ENCODE measurements at regions of chr11 and their contacts with region 1.

Region 1: GRCh38 chr11:126310228-126310991 is 6.5 kb downstream of the DCPS start:
- DNase-seq: peak; percentile 70
- ATAC-seq: peak; percentile 84
- H3K4me3 Mint-ChIP-seq: no peak overlapping the region
- H3K27ac Mint-ChIP-seq: no peak overlapping the region
- H3K4me1 Mint-ChIP-seq: peaks cover 31% of the 10 kb centered on the region
- H3K27me3 Mint-ChIP-seq: no peaks in the 10 kb centered on the region

Region 2: DNA sequence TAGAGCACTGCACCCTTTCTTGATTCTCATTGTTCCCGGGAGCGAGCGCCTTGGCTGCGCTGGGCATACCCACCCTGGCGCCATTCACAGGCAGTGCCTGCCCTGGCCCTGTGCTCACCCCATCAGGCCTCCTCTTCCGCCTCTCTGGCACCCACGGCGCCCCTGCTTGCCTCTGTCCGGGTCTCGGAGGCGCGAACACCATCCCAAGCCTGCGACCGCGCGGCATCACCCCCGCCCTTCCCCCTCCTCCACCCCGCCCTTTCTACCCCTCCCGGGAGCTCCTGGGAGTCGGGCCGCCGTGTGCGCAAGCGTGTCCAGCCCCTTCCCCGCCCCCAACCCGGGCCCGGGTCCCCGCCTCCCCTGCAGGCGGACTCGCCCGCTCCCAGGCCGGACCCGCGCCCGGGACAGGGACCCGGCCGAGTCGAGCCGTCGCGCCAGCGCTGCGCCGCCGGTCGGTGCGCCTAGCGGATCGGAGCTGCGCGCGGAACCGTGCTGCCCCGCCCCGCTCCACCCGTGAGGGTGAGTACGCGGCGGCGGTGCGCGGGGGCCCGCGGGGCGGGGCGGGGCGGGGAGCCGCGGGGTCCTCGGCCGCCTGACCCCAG is 45.0 kb after region 1 on chr11 and contains the start of gene ST3GAL4:
- CTCF ChIA-PET with region 1: interaction called, 11 read pairs
- POLR2A ChIA-PET with region 1: no interaction called
- DNase-seq: peak; percentile 78
- ATAC-seq: peak; percentile 79
- H3K4me3 Mint-ChIP-seq: peak within 1 kb of the TSS; percentile 94
- H3K27ac Mint-ChIP-seq: peak within 1 kb of the TSS; percentile 90
- H3K4me1 Mint-ChIP-seq: peaks cover 51% of the 10 kb centered on the region
- H3K27me3 Mint-ChIP-seq: no peaks in the 10 kb centered on the region
- total RNA-seq, gene ST3GAL4: 10.3 to 11.8 TPM

Region 3: DNA sequence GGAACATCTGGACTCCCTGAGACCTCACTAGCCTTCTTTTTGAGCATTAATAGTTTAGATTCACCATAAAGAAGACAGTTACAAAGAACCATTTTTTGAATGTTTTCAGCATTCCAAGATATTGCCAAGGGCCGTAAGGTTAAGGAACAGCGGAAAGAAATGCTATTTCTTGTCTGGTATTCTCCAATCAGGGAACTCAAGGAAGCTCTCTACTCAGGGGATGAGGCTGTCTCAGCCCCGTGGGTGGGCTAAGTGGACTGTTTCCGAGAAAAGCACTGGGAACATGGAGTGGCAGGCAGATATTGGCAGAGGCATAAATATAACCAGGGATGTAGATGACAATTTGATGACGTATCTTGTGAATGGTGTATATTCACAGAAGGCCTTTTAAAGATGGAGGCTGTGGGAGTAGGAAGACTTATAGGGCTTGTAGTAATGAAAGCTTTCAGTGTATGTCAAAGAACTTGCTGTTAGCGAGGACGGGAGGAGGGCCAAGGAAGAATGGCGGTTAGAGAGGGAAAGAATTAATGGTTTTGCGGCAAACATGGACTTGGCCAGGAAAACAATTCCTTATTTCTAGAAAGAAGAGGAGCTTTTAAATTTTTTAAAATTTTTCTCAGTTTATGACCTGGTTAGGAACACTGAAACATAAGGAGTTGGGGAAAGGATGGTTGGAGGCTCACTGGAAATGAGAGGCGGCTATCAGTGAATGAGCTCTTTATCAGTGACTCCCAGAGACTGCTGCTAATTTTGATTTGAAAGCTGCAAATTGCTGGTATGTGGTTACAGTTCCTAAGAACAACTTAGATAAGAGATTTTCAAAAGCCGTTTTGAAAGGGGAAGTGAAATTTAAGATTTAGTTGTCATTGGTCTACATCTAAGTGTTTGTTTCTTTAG is 109.6 kb after region 1 on chr11:
- CTCF ChIA-PET with region 1: interaction called, 11 read pairs
- POLR2A ChIA-PET with region 1: no interaction called
- DNase-seq: no peak
- ATAC-seq: no peak
- H3K4me3 Mint-ChIP-seq: no peak overlapping the region
- H3K27ac Mint-ChIP-seq: no peak overlapping the region
- H3K4me1 Mint-ChIP-seq: peaks cover 21% of the 10 kb centered on the region
- H3K27me3 Mint-ChIP-seq: peaks cover 8% of the 10 kb centered on the region

Region 4: GRCh38 chr11:126440792-126441514 is 130.5 kb after region 1 on chr11:
- CTCF ChIA-PET with region 1: interaction called, 26 read pairs
- POLR2A ChIA-PET with region 1: no interaction called
- DNase-seq: peak; percentile 79
- ATAC-seq: peak; percentile 82
- H3K4me3 Mint-ChIP-seq: no peak overlapping the region
- H3K27ac Mint-ChIP-seq: no peak overlapping the region
- H3K4me1 Mint-ChIP-seq: peaks cover 13% of the 10 kb centered on the region
- H3K27me3 Mint-ChIP-seq: peaks cover 15% of the 10 kb centered on the region